ENCODE measurements at regions of chr2 and their contacts with region 1.

Region 1: GRCh38 chr2:7044261-7045250 is 127.3 kb downstream of the RNF144A start:
- H3K4me3 ChIP-seq: no peak overlapping the region
- H3K27ac ChIP-seq: no peak overlapping the region
- H3K4me1 ChIP-seq: no peaks in the 10 kb centered on the region
- CTCF ChIP-seq: no peak

Region 2: DNA sequence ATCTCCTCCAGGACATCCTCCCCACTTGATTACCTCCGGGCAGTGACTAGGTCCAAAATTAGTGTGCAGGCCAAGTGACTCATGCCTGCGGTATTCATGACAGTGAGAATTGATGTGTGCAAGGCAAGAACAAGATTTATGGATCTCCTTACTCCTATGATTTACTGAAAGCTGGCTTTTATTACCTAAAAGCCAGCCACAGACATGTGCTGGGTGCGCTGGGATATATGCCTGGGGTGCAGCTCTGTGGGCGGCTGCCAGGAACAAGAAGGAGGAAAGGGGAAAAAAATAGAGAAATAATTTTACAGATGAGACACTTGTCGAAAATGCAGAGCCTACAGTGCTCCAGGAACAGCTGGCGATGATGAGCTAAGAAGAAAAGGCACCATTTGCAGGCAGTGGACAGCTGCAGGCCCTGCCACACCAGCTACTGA is 538.2 kb before region 1 on chr2:
- CTCF ChIA-PET with region 1: no interaction called
- POLR2A ChIA-PET with region 1: no interaction called
- H3K4me3 ChIP-seq: no peak overlapping the region
- H3K27ac ChIP-seq: no peak overlapping the region
- H3K4me1 ChIP-seq: no peaks in the 10 kb centered on the region
- CTCF ChIP-seq: no peak

Region 3: GRCh38 chr2:6896930-6897759 is 147.4 kb before region 1 on chr2:
- CTCF ChIA-PET with region 1: interaction called, 35 read pairs
- POLR2A ChIA-PET with region 1: no interaction called
- H3K4me3 ChIP-seq: no peak overlapping the region
- H3K27ac ChIP-seq: no peak overlapping the region
- H3K4me1 ChIP-seq: no peaks in the 10 kb centered on the region
- CTCF ChIP-seq: no peak

Region 4: GRCh38 chr2:7014174-7014640 is 30.3 kb before region 1 on chr2:
- CTCF ChIA-PET with region 1: interaction called, 15 read pairs
- POLR2A ChIA-PET with region 1: no interaction called
- H3K4me3 ChIP-seq: no peak overlapping the region
- H3K27ac ChIP-seq: no peak overlapping the region
- H3K4me1 ChIP-seq: 0 out of 2 replicates have a peak, but pooled peaks cover 5% of the 10 kb centered on the region
- CTCF ChIP-seq: 0 out of 2 replicates have a peak, but pooled peaks have one; percentile 13

Region 5: GRCh38 chr2:7023542-7023941 is 21.0 kb before region 1 on chr2:
- CTCF ChIA-PET with region 1: interaction called, 43 read pairs
- POLR2A ChIA-PET with region 1: no interaction called
- H3K4me3 ChIP-seq: no peak overlapping the region
- H3K27ac ChIP-seq: no peak overlapping the region
- H3K4me1 ChIP-seq: no peaks in the 10 kb centered on the region
- CTCF ChIP-seq: no peak

Region 6: GRCh38 chr2:7031547-7032245 is 12.9 kb before region 1 on chr2:
- CTCF ChIA-PET with region 1: interaction called, 43 read pairs
- POLR2A ChIA-PET with region 1: no interaction called
- H3K4me3 ChIP-seq: no peak overlapping the region
- H3K27ac ChIP-seq: no peak overlapping the region
- H3K4me1 ChIP-seq: no peaks in the 10 kb centered on the region; the same call in 1 of the 2 replicates
- CTCF ChIP-seq: no peak

Region 7: GRCh38 chr2:7118606-7119503 is 74.3 kb after region 1 on chr2:
- CTCF ChIA-PET with region 1: interaction called, 10 read pairs
- POLR2A ChIA-PET with region 1: no interaction called
- H3K4me3 ChIP-seq: no peak overlapping the region
- H3K27ac ChIP-seq: no peak overlapping the region
- H3K4me1 ChIP-seq: no peaks in the 10 kb centered on the region
- CTCF ChIP-seq: peak; percentile 23; the same call in 1 of the 2 replicates